ENCODE measurements at regions of chr6 and their contacts with region 1.

Region 1: GRCh38 chr6:125956506-125957390 is at the start of gene HINT3:
- DNase-seq: peak; percentile 84 to 100 (median 88)
- ATAC-seq: peak; percentile 86
- H3K4me3 ChIP-seq: peak within 1 kb of the TSS; percentile 86
- H3K27ac ChIP-seq: peak within 1 kb of the TSS; percentile 89
- H3K4me1 ChIP-seq: peaks cover 30 to 34% of the 10 kb centered on the region in 2 experiments; a peak in 4 of 5 replicates
- H3K27me3 ChIP-seq: no peaks in the 10 kb centered on the region
- CTCF ChIP-seq: peak; percentile 98 to 99 (median 99)
- EP300 ChIP-seq: peak; percentile 76
- POLR2A ChIP-seq: peak; percentile 75
- RAD21 ChIP-seq: peak; percentile 98
- polyA plus RNA-seq, gene HINT3: 1.4 to 1.9 TPM

Region 2: GRCh38 chr6:125779924-125780539 is 176.7 kb before region 1 on chr6:
- CTCF ChIA-PET with region 1: interaction called, 5 read pairs
- POLR2A ChIA-PET with region 1: interaction called, 26 read pairs
- in situ Hi-C with region 1: no loop called
- intact Hi-C with region 1: loop called (anchors 1 kb)
- DNase-seq: peak; percentile 87 to 94 (median 89)
- ATAC-seq: peak; percentile 79
- H3K4me3 ChIP-seq: peak overlapping the region; percentile 47
- H3K27ac ChIP-seq: peak overlapping the region; percentile 98
- H3K4me1 ChIP-seq: no peaks in the 10 kb centered on the region; a peak in 2 of 5 replicates
- H3K27me3 ChIP-seq: no peaks in the 10 kb centered on the region
- CTCF ChIP-seq: peak in 2 of 3 experiments; percentile 27 to 34; a peak in 2 of 6 replicates
- EP300 ChIP-seq: peak; percentile 79
- POLR2A ChIP-seq: no peak
- RAD21 ChIP-seq: 0 out of 4 replicates have a peak, but pooled peaks of 1 of the 2 experiments have one; percentile 9

Region 3: GRCh38 chr6:125858427-125859320 is 98.1 kb before region 1 on chr6:
- CTCF ChIA-PET with region 1: interaction called, 16 read pairs
- POLR2A ChIA-PET with region 1: no interaction called
- in situ Hi-C with region 1: loop called (anchors 5 kb)
- intact Hi-C with region 1: loop called (anchors 1 kb)
- DNase-seq: peak; percentile 40 to 85 (median 65)
- ATAC-seq: peak; percentile 98
- H3K4me3 ChIP-seq: no peak overlapping the region
- H3K27ac ChIP-seq: no peak overlapping the region
- H3K4me1 ChIP-seq: no peaks in the 10 kb centered on the region; a peak in 1 of 5 replicates
- H3K27me3 ChIP-seq: no peaks in the 10 kb centered on the region
- CTCF ChIP-seq: peak; percentile 85 to 90 (median 89)
- EP300 ChIP-seq: no peak
- POLR2A ChIP-seq: no peak
- RAD21 ChIP-seq: peak; percentile 72 to 86

Region 4: DNA sequence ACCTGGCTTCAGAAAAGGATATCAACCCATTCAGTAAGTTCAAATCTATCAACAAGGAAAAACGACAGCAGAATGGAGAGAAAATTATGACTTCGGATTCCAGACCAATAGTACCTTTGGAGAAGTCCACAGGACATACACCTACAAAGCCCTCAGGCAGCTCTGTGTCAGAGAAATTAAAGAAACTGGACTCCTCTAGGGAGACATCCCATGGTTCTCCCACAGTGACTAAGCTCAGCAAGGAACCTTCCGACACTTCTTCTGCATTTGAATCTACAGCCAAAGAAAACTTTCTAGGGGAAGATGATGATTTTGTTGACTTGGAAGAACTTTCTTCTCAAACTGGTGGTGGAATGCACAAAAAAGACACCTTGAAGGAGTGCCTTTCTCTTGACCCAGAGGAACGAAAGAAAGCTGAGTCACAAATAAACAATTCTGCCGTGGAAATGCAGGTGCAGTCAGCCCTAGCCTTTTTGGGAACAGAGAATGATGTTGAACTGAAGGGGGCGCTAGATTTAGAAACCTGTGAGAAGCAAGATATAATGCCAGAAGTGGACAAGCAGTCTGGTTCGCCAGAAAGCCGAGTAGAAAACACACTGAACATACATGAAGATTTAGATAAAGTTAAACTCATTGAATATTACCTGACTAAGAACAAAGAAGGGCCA is 67.6 kb before region 1 on chr6:
- CTCF ChIA-PET with region 1: interaction called, 7 read pairs
- POLR2A ChIA-PET with region 1: no interaction called
- in situ Hi-C with region 1: no loop called
- intact Hi-C with region 1: loop called (anchors 1 kb)
- DNase-seq: peak; percentile 56 to 76 (median 65)
- ATAC-seq: peak; percentile 91
- H3K4me3 ChIP-seq: no peak overlapping the region
- H3K27ac ChIP-seq: no peak overlapping the region
- H3K4me1 ChIP-seq: peaks cover 0 to 2% of the 10 kb centered on the region in 2 experiments; a peak in 2 of 5 replicates
- H3K27me3 ChIP-seq: no peaks in the 10 kb centered on the region
- CTCF ChIP-seq: peak; percentile 66 to 77 (median 76)
- EP300 ChIP-seq: no peak
- POLR2A ChIP-seq: no peak
- RAD21 ChIP-seq: peak; percentile 35 to 58; a peak in 3 of 4 replicates

Region 5: GRCh38 chr6:125923987-125924568 is 32.7 kb before region 1 on chr6:
- CTCF ChIA-PET with region 1: no interaction called
- POLR2A ChIA-PET with region 1: interaction called, 4 read pairs
- in situ Hi-C with region 1: no loop called
- intact Hi-C with region 1: loop called (anchors 1 kb)
- DNase-seq: peak; percentile 22 to 76 (median 48)
- ATAC-seq: peak; percentile 87
- H3K4me3 ChIP-seq: no peak overlapping the region
- H3K27ac ChIP-seq: peak overlapping the region; percentile 70
- H3K4me1 ChIP-seq: peaks cover 11 to 23% of the 10 kb centered on the region in 2 experiments
- H3K27me3 ChIP-seq: no peaks in the 10 kb centered on the region
- CTCF ChIP-seq: peak in 1 of 3 experiments; percentile 10; a peak in 1 of 6 replicates
- EP300 ChIP-seq: peak; percentile 68; the same call in 1 of the 2 replicates
- POLR2A ChIP-seq: no peak
- RAD21 ChIP-seq: 0 out of 4 replicates have a peak, but pooled peaks of 1 of the 2 experiments have one; percentile 20

Region 6: DNA sequence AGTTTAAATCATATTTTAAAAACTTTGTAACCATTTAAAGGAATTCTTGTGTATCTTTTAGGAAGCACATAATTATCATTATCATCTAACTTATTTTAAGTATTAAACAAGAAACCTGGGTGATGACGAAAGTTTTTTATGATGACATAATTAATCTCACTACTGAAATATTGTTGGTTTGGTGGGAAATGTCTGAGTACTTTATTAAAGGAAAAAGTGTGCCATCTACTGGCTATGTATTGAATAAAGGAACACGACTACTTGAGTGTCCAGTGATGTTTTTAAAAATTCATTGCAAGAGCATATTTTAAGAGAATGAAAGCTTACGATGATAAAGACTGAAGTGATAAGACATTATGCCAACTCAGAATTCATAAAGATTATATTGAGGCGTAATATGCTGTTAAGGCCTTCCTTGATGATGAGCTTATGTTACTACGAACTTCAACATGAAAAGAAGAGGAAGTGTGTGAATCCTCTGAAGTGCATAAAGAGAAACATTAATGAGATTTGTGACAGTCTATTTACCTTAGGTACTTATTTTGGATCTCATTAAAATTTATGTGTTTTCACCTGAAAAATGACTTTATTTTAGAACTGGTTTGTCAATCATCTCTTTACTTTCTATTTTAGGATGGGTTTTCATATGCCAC is 17.6 kb after region 1 on chr6:
- CTCF ChIA-PET with region 1: interaction called, 6 read pairs
- POLR2A ChIA-PET with region 1: interaction called, 3 read pairs
- in situ Hi-C with region 1: no loop called
- intact Hi-C with region 1: loop called (anchors 1 kb)
- DNase-seq: peak in 3 of 4 experiments; percentile 39 to 64 (median 41)
- ATAC-seq: peak; percentile 90
- H3K4me3 ChIP-seq: no peak overlapping the region
- H3K27ac ChIP-seq: no peak overlapping the region
- H3K4me1 ChIP-seq: no peaks in the 10 kb centered on the region
- H3K27me3 ChIP-seq: no peaks in the 10 kb centered on the region
- CTCF ChIP-seq: peak; percentile 45 to 80 (median 50); a peak in 5 of 6 replicates
- EP300 ChIP-seq: peak; percentile 23; the same call in 1 of the 2 replicates
- POLR2A ChIP-seq: no peak
- RAD21 ChIP-seq: peak; percentile 81 to 84

Region 7: GRCh38 chr6:126422912-126423311 is 466.2 kb after region 1 on chr6:
- CTCF ChIA-PET with region 1: no interaction called
- POLR2A ChIA-PET with region 1: no interaction called
- in situ Hi-C with region 1: no loop called
- intact Hi-C with region 1: no loop called
- DNase-seq: no peak
- ATAC-seq: no peak
- H3K4me3 ChIP-seq: no peak overlapping the region
- H3K27ac ChIP-seq: no peak overlapping the region
- H3K4me1 ChIP-seq: no peaks in the 10 kb centered on the region
- H3K27me3 ChIP-seq: no peaks in the 10 kb centered on the region
- CTCF ChIP-seq: no peak
- EP300 ChIP-seq: no peak
- POLR2A ChIP-seq: no peak
- RAD21 ChIP-seq: peak; percentile 23 to 33; a peak in 2 of 4 replicates